Prostate gland (tissue), 2 donors: ENCODE measurements at regions of chr16 and their contacts with region 1.

Region 1: DNA sequence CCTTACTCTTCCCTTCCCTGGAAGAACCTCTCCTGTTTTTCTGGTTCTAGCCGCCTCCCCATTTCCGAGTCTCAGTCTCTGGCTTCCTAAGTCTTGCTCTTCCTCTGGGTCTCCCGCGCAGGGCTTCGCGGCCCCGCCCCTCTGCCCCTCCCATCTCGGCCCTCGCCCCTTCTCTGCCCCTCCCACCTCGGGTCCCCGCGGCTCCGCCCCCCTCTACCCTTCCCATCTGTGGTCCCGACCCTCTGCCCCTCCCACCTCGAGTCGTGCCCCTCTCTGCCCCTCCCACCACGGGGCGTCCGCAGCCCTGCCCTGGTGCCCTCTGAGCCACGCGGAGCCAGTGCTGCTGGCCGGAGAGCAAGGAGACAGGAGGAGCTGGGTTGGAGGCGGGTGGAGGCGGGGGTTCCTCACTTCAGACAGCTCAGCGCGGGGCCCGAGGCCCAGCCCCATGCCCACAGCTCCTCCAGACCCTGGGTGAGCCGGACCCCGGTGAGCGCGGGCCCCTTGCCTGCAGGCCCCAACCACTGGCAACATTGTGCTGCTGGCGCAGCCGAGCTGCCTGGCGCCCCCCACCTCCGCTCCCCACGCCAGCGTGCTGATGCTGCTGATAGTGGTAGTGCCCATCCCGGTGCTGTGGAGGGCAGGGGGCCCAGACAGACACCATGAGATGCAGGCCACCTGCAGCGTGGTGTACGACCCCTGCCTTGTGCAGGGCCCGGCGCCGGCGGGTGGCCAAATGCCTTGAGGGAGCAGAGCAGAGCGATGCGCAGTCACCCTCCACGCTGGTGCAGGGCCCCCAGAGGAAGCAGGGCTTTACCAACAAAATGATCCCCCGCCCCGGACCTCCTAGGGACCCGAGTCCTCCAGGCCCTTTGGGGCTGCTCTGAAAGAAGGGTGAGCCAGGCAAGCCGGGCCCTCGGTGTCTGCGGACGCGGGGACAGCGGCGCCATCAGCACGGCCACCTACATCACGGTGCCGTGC is 2115.3 kb downstream of the TP53TG3F start:
- DNase-seq: no peak
- H3K4me3 ChIP-seq: no peak overlapping the region
- H3K27ac ChIP-seq: no peak overlapping the region
- H3K4me1 ChIP-seq: no peaks in the 10 kb centered on the region
- H3K27me3 ChIP-seq: no peaks in the 10 kb centered on the region
- CTCF ChIP-seq: no peak
- POLR2A ChIP-seq: no peak

Region 2: DNA sequence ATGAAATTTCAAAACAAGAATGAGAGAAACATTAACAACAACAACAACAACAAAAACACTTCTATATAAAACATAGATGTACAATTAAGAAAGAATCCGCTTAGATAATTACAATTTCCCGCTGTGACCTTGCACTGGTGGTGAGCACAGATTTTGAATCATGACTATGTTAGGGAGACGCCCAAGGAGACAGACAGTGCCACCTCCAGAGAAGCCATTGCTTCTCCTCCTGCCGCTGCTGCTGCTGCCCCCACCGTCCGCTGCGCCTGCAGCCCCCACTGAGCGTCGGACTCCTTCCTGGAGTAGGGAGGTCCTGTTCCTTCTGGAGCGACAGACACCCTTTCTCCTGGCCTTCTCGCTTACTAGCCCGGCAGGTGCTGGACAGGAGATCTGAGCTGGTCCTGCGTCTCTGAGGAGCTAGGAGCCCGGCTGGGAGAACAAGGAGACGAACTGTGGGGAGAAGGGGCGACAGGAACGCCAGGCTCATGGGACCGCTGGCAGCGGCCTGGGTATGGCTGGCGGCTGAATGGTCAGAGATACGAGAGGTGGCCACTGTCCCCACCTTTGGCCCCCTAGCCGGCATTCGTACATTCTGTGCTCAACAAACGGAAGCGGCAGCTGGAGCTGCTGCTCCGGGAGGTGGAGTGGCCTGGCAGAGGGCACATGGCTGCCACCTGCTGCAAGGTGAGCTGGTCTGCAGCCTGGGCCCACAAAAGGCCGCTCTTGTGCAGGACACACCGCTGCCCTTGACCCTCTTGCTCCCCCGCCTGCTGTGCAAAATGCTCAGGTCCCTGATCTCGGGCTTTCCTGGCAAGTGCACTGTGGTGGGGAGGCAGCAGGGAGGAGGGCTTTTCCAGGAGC is 48.8 kb before region 1 on chr16:
- intact Hi-C with region 1: no loop called
- DNase-seq: no peak
- H3K4me3 ChIP-seq: no peak overlapping the region
- H3K27ac ChIP-seq: no peak overlapping the region
- H3K4me1 ChIP-seq: no peaks in the 10 kb centered on the region
- H3K27me3 ChIP-seq: no peaks in the 10 kb centered on the region
- CTCF ChIP-seq: no peak
- POLR2A ChIP-seq: no peak

Region 3: GRCh38 chr16:35631261-35631945 is 56.7 kb after region 1 on chr16:
- intact Hi-C with region 1: loop called (anchors 10 kb)
- DNase-seq: no peak
- H3K4me3 ChIP-seq: no peak overlapping the region
- H3K27ac ChIP-seq: peak overlapping the region in 1 of 2 donors; percentile 7
- H3K4me1 ChIP-seq: no peaks in the 10 kb centered on the region
- H3K27me3 ChIP-seq: no peaks in the 10 kb centered on the region
- CTCF ChIP-seq: no peak
- POLR2A ChIP-seq: no peak